Activated CD8-positive, alpha-beta memory T cell treated with anti-CD3 and anti-CD28 coated beads, Interleukin-2, amount 10 ng/mL, durations not matched to agents 7 days and 5 days (primary cell): ENCODE measurements at regions of chr14 and their contacts with region 1.

Region 1: DNA sequence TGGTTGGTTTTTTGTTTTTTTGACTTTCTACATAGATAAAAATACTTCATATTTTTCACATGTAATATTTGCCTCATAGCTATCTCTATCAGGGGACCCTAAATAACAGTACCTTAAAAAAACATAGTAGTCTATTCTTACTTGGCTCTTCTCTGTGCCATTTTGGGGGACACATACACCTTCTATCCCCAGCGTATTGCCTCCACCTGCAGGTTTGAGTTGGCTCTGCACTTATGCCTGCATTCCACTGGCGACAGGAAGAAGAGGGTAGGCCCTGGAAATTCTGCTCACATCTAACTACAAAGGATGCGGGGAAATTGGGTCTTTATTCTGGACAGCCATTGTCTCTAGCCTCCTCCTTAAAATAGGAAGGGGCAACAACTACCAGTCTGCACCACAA is 13.8 kb upstream of the IFI27L2 start:
- DNase-seq: no peak
- ATAC-seq: no peak
- H3K4me3 Mint-ChIP-seq: no peak overlapping the region
- H3K27ac Mint-ChIP-seq: no peak overlapping the region
- H3K4me1 Mint-ChIP-seq: peaks cover 25% of the 10 kb centered on the region
- H3K27me3 Mint-ChIP-seq: peaks cover 4% of the 10 kb centered on the region

Region 2: DNA sequence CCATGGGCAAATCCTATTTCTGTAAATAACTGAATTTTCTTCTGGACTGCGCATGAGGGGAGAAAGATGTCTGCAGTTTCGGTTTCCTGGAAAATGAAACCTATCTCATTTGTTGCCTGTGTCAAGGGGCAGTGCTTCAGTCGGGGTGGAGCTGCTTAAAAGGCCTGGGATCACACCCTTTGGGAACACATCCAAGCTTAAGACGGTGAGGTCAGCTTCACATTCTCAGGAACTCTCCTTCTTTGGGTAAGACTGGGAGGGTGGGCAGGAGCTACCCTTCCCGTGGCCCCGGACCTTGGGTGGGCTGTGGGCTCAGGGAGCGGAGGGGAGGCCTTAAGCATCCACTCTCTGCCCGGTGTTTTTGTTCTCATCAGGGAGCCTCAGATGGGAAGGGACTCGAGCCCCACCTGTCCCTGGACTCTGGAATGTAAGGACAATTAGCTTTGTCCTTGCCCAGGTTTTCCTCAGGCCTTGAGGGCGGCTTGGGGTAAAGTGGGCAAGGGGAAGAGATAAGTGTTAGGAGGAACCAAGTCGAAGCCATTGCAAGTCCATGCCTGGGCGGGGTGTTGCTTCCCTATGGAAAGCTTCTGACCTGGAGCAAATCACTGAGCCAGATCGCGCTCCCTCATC is 32.6 kb before region 1 on chr14 and contains the start of gene IFI27:
- CTCF ChIA-PET with region 1: no interaction called
- DNase-seq: peak; percentile 46
- ATAC-seq: peak; percentile 64
- H3K4me3 Mint-ChIP-seq: peak within 1 kb of the TSS; percentile 69
- H3K27ac Mint-ChIP-seq: peak within 1 kb of the TSS; percentile 82
- H3K4me1 Mint-ChIP-seq: peaks cover 25% of the 10 kb centered on the region
- H3K27me3 Mint-ChIP-seq: peaks cover 4% of the 10 kb centered on the region
- total RNA-seq, gene IFI27: 81.5 to 325 TPM

Region 3: GRCh38 chr14:94180655-94181271 is 37.5 kb after region 1 on chr14:
- CTCF ChIA-PET with region 1: interaction called, 53 read pairs
- DNase-seq: no peak
- ATAC-seq: peak; percentile 91
- H3K4me3 Mint-ChIP-seq: peak overlapping the region; percentile 61
- H3K27ac Mint-ChIP-seq: peak overlapping the region; percentile 70
- H3K4me1 Mint-ChIP-seq: peaks cover 11% of the 10 kb centered on the region
- H3K27me3 Mint-ChIP-seq: peaks cover 31% of the 10 kb centered on the region